Activated CD8-positive, alpha-beta T cell treated with anti-CD3 and anti-CD28 coated beads, Interleukin-2, amount 10 ng/mL, durations not matched to agents 7 days and 5 days (primary cell): ENCODE measurements at regions of chr18 and their contacts with region 1.

Region 1: DNA sequence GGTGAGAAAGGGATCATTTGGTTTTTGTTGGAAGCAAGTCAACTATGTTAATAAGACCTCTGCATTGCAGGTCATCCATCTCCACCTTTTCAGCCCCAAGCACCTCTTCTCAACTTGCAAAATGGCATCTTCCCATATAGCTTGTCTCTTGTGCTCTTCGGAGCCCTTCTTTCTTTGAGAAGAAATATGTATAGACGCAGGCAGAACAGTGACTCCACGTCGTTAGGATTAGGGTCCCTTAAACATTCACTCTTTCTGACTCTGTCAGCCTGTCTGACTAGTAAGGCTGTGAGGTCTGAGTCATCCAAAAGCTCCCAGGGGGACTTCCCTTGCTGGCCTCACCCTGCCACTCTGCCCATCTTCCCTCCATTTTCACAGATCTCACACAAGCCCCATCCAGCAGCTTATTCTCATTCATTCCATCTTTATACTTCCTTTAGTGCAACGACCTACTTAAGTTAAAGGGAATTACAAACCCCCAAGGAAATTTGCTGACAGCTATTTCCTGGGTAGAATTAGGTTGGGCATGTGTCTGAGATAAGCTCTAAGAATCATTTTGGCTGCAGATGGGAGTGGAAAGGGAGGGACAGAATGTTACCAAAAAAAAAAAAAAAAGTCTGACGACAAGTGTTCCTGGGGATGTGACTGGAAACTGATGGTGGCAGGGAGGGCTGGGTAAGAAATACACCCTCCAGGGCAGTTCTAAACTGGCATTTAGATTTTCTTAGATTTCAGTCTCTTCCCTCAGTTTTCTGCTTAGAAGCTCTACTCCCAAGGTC is 37.7 kb upstream of the MEX3C start:
- DNase-seq: peak; percentile 37
- ATAC-seq: peak; percentile 73
- H3K4me3 Mint-ChIP-seq: peak overlapping the region; percentile 0
- H3K27ac Mint-ChIP-seq: peak overlapping the region; percentile 49
- H3K4me1 Mint-ChIP-seq: peaks cover 28% of the 10 kb centered on the region
- H3K27me3 Mint-ChIP-seq: no peaks in the 10 kb centered on the region

Region 2: DNA sequence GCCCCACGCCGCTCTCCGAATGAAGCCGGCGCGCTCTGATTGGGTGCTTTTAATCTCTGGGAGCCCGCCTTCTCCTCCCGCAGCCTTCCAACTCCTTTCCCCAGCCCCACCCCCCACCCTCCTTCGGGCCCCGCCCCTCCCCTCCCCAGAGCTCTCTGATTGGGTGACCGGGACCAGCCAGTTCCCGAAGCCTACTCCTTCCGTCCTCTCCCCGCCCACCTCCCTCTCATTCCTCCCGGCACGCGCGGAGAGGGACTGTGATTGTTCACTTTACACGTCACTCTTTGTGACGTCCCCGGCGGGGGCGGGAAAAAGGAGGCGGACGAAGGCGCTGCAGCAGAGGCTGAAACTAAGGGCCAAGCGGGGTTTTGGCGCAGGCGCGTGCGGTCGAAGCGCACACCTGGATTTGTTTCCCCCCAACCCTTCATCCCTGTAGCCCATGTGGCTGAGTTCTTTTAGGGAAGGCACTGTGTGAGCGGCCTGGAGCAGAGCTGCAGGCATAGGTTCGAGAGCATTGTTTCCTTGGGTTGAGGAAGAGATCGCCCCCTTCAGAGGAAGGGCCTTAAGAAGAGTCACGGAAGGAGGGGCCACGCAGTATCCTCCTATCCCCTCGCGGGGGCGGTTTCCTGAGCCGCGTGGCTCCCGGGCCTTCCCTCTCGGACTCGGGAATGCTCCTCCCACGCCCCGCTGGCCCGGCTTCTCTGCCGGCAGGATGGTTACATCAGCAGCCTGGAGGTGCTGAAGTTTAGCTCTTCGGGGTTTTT is 37.4 kb before region 1 on chr18 and contains the start of gene MEX3C:
- CTCF ChIA-PET with region 1: interaction called, 3 read pairs
- POLR2A ChIA-PET with region 1: interaction called, 13 read pairs
- DNase-seq: peak; percentile 99
- ATAC-seq: peak; percentile 86
- H3K4me3 Mint-ChIP-seq: peak within 1 kb of the TSS; percentile 95
- H3K27ac Mint-ChIP-seq: peak within 1 kb of the TSS; percentile 98
- H3K4me1 Mint-ChIP-seq: peaks cover 24% of the 10 kb centered on the region
- H3K27me3 Mint-ChIP-seq: no peaks in the 10 kb centered on the region
- total RNA-seq, gene MEX3C: 40.4 to 45.8 TPM